PC-3 (cell line): ENCODE measurements at regions of chr17 and their contacts with region 1.

Region 1: GRCh38 chr17:56926270-56926669 is 12.4 kb upstream of the TRIM25 start:
- DNase-seq: no peak
- ATAC-seq: no peak
- H3K4me3 ChIP-seq: no peak overlapping the region
- H3K27ac ChIP-seq: no peak overlapping the region
- H3K4me1 ChIP-seq: no peaks in the 10 kb centered on the region
- H3K27me3 ChIP-seq: no peaks in the 10 kb centered on the region
- CTCF ChIP-seq: no peak

Region 2: DNA sequence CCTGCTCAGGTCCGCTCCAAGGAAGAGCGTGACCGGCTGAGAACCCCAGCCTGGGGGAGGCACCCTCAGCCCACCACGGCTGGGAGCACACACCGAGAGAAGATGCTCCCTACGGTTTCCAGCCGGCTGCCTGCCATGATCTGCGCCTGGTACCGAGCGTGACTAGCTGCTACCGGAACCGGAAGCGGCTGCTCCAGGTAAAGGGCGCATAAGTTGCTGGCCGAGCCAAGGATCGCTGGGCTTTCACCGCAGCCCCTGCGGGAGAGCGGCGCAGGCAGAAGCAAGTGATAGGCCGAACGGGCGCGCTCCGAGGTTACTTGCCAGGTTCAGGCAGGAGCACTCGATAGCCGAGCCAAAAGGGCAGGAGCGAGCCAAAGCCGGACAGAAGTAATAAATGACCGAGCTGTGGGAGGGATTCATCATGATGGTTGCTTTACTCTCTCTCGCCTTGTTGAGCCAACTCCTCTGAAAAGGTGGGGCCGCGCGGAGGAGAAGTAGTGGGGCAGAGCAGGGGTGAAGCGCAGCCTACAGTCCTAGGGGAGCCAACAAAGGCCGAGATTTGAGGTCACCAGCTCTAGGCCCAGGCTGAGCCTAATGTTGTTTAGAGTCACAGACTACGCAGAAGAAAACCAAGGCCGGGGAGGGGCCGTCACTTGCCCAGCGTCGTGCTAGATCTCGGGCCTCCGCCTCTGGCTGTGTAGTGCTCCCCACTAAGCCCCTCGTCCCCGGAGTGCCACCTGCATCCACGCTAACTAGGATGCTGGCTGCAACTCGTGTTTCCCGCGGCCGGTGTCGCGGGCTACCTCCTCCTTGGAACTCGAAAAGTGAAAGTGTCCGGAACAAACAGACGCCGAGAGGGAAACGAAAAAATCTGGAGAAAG is 923.8 kb after region 1 on chr17 and contains the start of gene MRPS23:
- CTCF ChIA-PET with region 1: interaction called, 13 read pairs
- POLR2A ChIA-PET with region 1: no interaction called
- intact Hi-C with region 1: no loop called
- DNase-seq: peak; percentile 100
- ATAC-seq: peak; percentile 91
- H3K4me3 ChIP-seq: peak within 1 kb of the TSS; percentile 90
- H3K27ac ChIP-seq: peak within 1 kb of the TSS; percentile 55
- H3K4me1 ChIP-seq: peaks cover 14% of the 10 kb centered on the region
- H3K27me3 ChIP-seq: no peaks in the 10 kb centered on the region
- CTCF ChIP-seq: no peak
- total RNA-seq, gene MRPS23: 63.9 and 97.5 TPM in 2 replicates